ENCODE measurements at regions of chr14 and their contacts with region 1.

Region 1: GRCh38 chr14:74816124-74816523 is 53.0 kb downstream of the YLPM1 start:
- DNase-seq: no peak
- ATAC-seq: no peak
- H3K4me3 ChIP-seq: no peak overlapping the region
- H3K27ac ChIP-seq: no peak overlapping the region
- H3K4me1 ChIP-seq: no peaks in the 10 kb centered on the region
- H3K27me3 ChIP-seq: no peaks in the 10 kb centered on the region
- CTCF ChIP-seq: no peak
- EP300 ChIP-seq: no peak
- POLR2A ChIP-seq: no peak
- RAD21 ChIP-seq: no peak

Region 2: GRCh38 chr14:74836251-74836960 is 20.3 kb after region 1 on chr14:
- CTCF ChIA-PET with region 1: no interaction called
- POLR2A ChIA-PET with region 1: no interaction called
- RAD21 ChIA-PET with region 1: no interaction called
- SMC1A ChIA-PET with region 1: interaction called, 11 read pairs
- in situ Hi-C with region 1: no loop called
- intact Hi-C with region 1: no loop called
- DNase-seq: no peak
- ATAC-seq: no peak
- H3K4me3 ChIP-seq: no peak overlapping the region
- H3K27ac ChIP-seq: peak overlapping the region; percentile 60
- H3K4me1 ChIP-seq: peaks cover 56% of the 10 kb centered on the region
- H3K27me3 ChIP-seq: no peaks in the 10 kb centered on the region
- CTCF ChIP-seq: no peak
- EP300 ChIP-seq: no peak
- POLR2A ChIP-seq: no peak
- RAD21 ChIP-seq: no peak

Region 3: DNA sequence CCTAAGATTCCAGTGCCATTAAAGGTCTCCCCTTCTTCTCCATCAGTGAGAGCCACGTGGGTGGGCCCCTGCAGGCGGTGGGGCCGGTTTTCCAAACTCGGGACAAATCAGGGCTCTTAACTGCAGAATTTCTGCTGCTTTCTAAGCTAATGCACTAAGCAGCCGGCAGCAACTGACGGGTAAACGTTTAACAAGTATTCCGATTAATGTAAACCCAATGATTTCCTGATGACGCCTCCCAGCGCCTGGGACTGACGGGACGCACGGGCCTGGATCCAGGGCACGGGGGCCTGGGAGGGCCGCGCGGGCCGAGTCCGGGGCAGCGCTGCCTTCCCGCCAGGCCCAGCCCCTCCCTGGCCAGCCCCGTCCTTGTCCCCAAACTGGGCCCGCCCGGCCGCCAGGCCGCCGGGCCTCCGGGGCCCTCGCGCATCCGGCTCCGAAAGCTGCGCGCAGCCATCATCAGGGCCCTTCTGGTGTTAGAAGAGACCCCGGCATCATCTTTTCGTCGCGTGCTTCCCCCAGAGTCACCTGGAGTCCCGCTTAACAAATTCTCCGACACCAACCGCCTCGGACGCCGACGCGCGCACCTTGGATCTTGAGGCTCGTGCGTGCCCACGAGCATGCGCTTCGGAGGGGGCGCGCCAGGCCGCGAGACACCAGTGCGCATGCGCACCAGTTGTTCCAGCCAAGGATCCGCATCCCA is 234.9 kb after region 1 on chr14 and contains the start of gene MLH3:
- CTCF ChIA-PET with region 1: no interaction called
- POLR2A ChIA-PET with region 1: no interaction called
- RAD21 ChIA-PET with region 1: no interaction called
- SMC1A ChIA-PET with region 1: no interaction called
- in situ Hi-C with region 1: no loop called
- intact Hi-C with region 1: no loop called
- DNase-seq: no peak
- ATAC-seq: peak; percentile 94
- H3K4me3 ChIP-seq: peak within 1 kb of the TSS; percentile 65
- H3K27ac ChIP-seq: peak within 1 kb of the TSS; percentile 77
- H3K4me1 ChIP-seq: no peaks in the 10 kb centered on the region
- H3K27me3 ChIP-seq: no peaks in the 10 kb centered on the region
- CTCF ChIP-seq: no peak
- EP300 ChIP-seq: no peak
- POLR2A ChIP-seq: peak; percentile 82
- RAD21 ChIP-seq: no peak
- polyA plus RNA-seq, gene MLH3: 17.9 to 23.4 TPM